Psoas muscle (tissue), 8 donors: ENCODE measurements at regions of chr19 and their contacts with region 1.

Region 1: GRCh38 chr19:7663706-7664105 is 5.1 kb upstream of the RETN start:
- DNase-seq: no peak
- ATAC-seq: no peak
- H3K4me3 ChIP-seq: no peak overlapping the region
- H3K27ac ChIP-seq: no peak overlapping the region
- H3K4me1 ChIP-seq: no peaks in the 10 kb centered on the region
- H3K27me3 ChIP-seq: peaks cover 0 to 2% (median under 1%) of the 10 kb centered on the region in 3 donors
- CTCF ChIP-seq: no peak

Region 2: DNA sequence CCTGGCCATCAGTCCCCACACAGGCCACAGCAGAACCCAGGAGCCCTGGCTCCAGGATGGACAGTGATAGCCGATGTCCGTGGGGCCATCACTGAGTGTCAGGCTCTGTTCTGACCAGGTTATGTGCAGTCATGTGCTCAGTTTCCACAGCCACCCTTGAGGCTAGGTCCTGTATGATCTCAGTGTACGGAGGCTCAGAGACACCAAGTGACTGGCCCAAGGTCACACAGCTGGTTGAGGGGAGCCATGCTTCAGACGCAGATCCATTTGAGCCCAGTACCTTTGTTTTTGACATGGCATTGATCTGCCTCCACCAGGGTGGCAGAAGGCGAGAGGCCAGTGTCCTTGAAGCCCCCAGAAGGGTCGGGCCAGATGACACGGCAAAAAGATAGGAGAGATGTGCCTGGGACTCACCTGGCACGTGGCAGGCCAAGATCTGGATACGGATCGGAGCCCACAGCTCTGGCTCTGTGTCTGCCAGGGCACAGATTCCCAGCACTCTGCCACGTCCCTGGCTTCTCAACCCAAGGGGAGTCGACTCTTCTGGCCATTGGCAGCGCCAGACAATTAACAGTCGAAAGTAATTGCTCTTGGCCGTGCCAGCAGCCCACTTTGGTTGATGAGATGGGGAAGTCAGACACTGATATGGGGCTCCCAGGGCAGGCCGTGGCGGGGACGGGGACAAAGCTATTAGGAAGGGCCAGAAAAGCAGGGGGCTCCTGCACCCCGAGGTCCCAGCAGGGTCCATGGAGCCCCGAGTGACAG is 181.9 kb after region 1 on chr19:
- intact Hi-C with region 1: no loop called
- DNase-seq: no peak
- ATAC-seq: no peak
- H3K4me3 ChIP-seq: no peak overlapping the region
- H3K27ac ChIP-seq: no peak overlapping the region
- H3K4me1 ChIP-seq: peaks cover 4% of the 10 kb centered on the region
- H3K27me3 ChIP-seq: no peaks in the 10 kb centered on the region
- CTCF ChIP-seq: no peak

Region 3: GRCh38 chr19:8095903-8096470 is 432.3 kb after region 1 on chr19:
- intact Hi-C with region 1: loop called in 1 of 2 experiments (anchors 5 kb)
- DNase-seq: no peak
- ATAC-seq: no peak
- H3K4me3 ChIP-seq: no peak overlapping the region
- H3K27ac ChIP-seq: no peak overlapping the region
- H3K4me1 ChIP-seq: no peaks in the 10 kb centered on the region
- H3K27me3 ChIP-seq: peaks cover 0 to 2% (median 0%) of the 10 kb centered on the region in 3 donors
- CTCF ChIP-seq: no peak